ENCODE measurements at regions of chr7 and their contacts with region 1.

Region 1: GRCh38 chr7:123494193-123494796 is 40.1 kb downstream of the IQUB start:
- DNase-seq: no peak
- H3K4me3 ChIP-seq: no peak overlapping the region
- H3K27ac ChIP-seq: no peak overlapping the region
- H3K4me1 ChIP-seq: peaks cover 0 to 6% (median 2%) of the 10 kb centered on the region in 6 donors
- H3K27me3 ChIP-seq: peaks cover 0 to 9% (median 0%) of the 10 kb centered on the region in 7 donors
- CTCF ChIP-seq: peak in 10 of 11 experiments; percentile 14 to 72 (median 56)
- POLR2A ChIP-seq: no peak

Region 2: GRCh38 chr7:123557398-123558288 is 63.3 kb after region 1 on chr7 and contains the start of gene NDUFA5:
- intact Hi-C with region 1: no loop called
- DNase-seq: peak; percentile 96
- H3K4me3 ChIP-seq: peak within 1 kb of the TSS; percentile 69 to 91 (median 83)
- H3K27ac ChIP-seq: peak within 1 kb of the TSS; percentile 66 to 90 (median 85)
- H3K4me1 ChIP-seq: peaks cover 6 to 56% (median 39%) of the 10 kb centered on the region in 6 donors
- H3K27me3 ChIP-seq: no peaks in the 10 kb centered on the region
- CTCF ChIP-seq: no peak
- POLR2A ChIP-seq: no peak
- total RNA-seq, gene NDUFA5: 40.6 to 60.5 (median 48.8) TPM

Region 3: DNA sequence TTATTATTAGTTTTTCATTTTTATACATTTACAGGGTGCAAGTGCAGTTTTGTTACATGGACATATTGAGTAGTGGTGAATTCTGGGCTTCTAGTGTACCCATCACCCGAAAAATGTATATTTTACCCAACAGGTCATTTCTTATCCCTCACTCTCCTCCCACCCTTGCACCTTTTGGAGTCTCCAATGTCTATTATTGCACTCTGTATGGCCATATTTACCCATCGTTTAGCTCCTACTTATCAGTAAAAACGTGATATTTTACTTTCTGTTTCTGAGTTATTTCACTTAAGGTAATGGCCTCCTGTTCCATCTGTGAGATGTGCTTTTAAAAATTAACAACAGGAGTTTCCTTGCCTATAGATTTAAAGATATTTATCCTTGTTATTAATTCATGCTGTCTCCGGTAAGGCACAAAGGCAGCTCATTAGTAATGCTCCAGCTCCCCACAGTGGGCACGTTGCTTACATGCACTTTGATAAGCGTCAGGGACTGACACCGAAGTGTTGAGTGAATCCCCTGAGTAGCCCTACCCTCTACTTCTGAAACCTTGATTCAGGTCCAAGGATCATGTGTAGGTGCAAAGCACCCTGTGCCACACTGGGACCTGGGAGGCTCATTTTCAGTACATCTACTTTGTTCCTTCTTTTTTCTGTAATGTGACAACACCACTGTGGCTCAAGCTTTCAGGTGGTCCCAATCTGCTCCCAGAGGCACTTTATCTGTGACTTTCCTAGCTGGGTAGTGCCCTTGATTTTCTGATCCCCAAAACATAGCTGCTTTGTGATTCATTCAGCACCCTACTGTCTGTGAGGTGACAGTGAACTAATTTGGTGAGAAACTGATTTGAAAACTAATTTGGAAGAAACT is 377.9 kb after region 1 on chr7:
- intact Hi-C with region 1: loop called (anchors 5 kb)
- DNase-seq: peak; percentile 64
- H3K4me3 ChIP-seq: no peak overlapping the region
- H3K27ac ChIP-seq: no peak overlapping the region
- H3K4me1 ChIP-seq: no peaks in the 10 kb centered on the region
- H3K27me3 ChIP-seq: no peaks in the 10 kb centered on the region
- CTCF ChIP-seq: peak in 9 of 11 experiments; percentile 17 to 51 (median 36)
- POLR2A ChIP-seq: no peak

Measured in spleen (tissue), 13 donors.